B cell (primary cell): ENCODE measurements at regions of chr1 and their contacts with region 1.

Region 1: GRCh38 chr1:35882945-35883634 is at the start of gene AGO1:
- DNase-seq: peak; percentile 96
- ATAC-seq: peak; percentile 96
- H3K4me3 ChIP-seq: peak within 1 kb of the TSS; percentile 67 to 100 (median 94)
- H3K4me3 Mint-ChIP-seq: peak within 1 kb of the TSS; percentile 94
- H3K27ac ChIP-seq: peak within 1 kb of the TSS; percentile 64 to 82
- H3K27ac Mint-ChIP-seq: peak within 1 kb of the TSS; percentile 91
- H3K4me1 ChIP-seq: peaks cover 34 to 48% of the 10 kb centered on the region in 2 donors
- H3K4me1 Mint-ChIP-seq: peaks cover 51% of the 10 kb centered on the region
- H3K27me3 ChIP-seq: no peaks in the 10 kb centered on the region
- H3K27me3 Mint-ChIP-seq: peaks cover 4% of the 10 kb centered on the region
- CTCF ChIP-seq: peak; percentile 93
- total RNA-seq, gene AGO1: 38.8 and 41.3 TPM in 2 replicates

Region 2: DNA sequence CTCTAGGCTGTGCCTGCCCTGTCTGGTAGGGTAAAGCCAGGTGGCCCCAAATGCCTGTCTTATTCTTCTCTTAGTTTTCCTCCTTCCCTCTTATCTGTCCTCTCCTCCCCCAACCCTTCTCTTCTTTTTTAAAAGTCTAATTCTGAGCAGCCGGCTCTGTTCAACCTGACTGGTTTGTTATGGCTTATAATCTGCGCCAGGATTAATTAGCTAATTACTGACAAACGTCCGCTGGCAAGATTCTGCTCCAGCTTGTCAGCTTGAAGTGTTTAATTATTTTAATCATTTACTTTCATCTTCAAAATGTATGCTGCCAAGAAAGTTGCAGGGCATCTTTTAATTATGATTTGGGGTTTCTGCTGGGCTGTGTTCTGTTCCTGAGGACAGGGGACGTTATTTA is 214.6 kb before region 1 on chr1:
- CTCF ChIA-PET with region 1: no interaction called
- POLR2A ChIA-PET with region 1: no interaction called
- intact Hi-C with region 1: no loop called
- DNase-seq: no peak
- ATAC-seq: no peak
- H3K4me3 ChIP-seq: no peak overlapping the region
- H3K4me3 Mint-ChIP-seq: no peak overlapping the region
- H3K27ac ChIP-seq: no peak overlapping the region
- H3K27ac Mint-ChIP-seq: no peak overlapping the region
- H3K4me1 ChIP-seq: no peaks in the 10 kb centered on the region
- H3K4me1 Mint-ChIP-seq: no peaks in the 10 kb centered on the region
- H3K27me3 ChIP-seq: peaks cover 0 to 24% (median 5%) of the 10 kb centered on the region in 4 experiments
- H3K27me3 Mint-ChIP-seq: peaks cover 36% of the 10 kb centered on the region
- CTCF ChIP-seq: no peak

Region 3: GRCh38 chr1:35825255-35825654 is 57.8 kb before region 1 on chr1:
- CTCF ChIA-PET with region 1: no interaction called
- POLR2A ChIA-PET with region 1: no interaction called
- intact Hi-C with region 1: no loop called
- DNase-seq: no peak
- ATAC-seq: no peak
- H3K4me3 ChIP-seq: no peak overlapping the region
- H3K4me3 Mint-ChIP-seq: no peak overlapping the region
- H3K27ac ChIP-seq: no peak overlapping the region
- H3K27ac Mint-ChIP-seq: no peak overlapping the region
- H3K4me1 ChIP-seq: no peaks in the 10 kb centered on the region
- H3K4me1 Mint-ChIP-seq: no peaks in the 10 kb centered on the region
- H3K27me3 ChIP-seq: no peaks in the 10 kb centered on the region
- H3K27me3 Mint-ChIP-seq: no peaks in the 10 kb centered on the region
- CTCF ChIP-seq: no peak

Region 4: GRCh38 chr1:35894183-35894582 is 11.1 kb after region 1 on chr1:
- CTCF ChIA-PET with region 1: interaction called, 15 read pairs
- POLR2A ChIA-PET with region 1: interaction called, 3 read pairs
- intact Hi-C with region 1: loop called (anchors 1 kb)
- DNase-seq: peak; percentile 88
- ATAC-seq: peak; percentile 99
- H3K4me3 ChIP-seq: no peak overlapping the region
- H3K4me3 Mint-ChIP-seq: peak overlapping the region; percentile 23
- H3K27ac ChIP-seq: peak overlapping the region; percentile 71 to 93
- H3K27ac Mint-ChIP-seq: peak overlapping the region; percentile 96
- H3K4me1 ChIP-seq: peaks cover 21 to 24% of the 10 kb centered on the region in 2 donors
- H3K4me1 Mint-ChIP-seq: peaks cover 32% of the 10 kb centered on the region
- H3K27me3 ChIP-seq: no peaks in the 10 kb centered on the region
- H3K27me3 Mint-ChIP-seq: no peaks in the 10 kb centered on the region
- CTCF ChIP-seq: no peak

Region 5: DNA sequence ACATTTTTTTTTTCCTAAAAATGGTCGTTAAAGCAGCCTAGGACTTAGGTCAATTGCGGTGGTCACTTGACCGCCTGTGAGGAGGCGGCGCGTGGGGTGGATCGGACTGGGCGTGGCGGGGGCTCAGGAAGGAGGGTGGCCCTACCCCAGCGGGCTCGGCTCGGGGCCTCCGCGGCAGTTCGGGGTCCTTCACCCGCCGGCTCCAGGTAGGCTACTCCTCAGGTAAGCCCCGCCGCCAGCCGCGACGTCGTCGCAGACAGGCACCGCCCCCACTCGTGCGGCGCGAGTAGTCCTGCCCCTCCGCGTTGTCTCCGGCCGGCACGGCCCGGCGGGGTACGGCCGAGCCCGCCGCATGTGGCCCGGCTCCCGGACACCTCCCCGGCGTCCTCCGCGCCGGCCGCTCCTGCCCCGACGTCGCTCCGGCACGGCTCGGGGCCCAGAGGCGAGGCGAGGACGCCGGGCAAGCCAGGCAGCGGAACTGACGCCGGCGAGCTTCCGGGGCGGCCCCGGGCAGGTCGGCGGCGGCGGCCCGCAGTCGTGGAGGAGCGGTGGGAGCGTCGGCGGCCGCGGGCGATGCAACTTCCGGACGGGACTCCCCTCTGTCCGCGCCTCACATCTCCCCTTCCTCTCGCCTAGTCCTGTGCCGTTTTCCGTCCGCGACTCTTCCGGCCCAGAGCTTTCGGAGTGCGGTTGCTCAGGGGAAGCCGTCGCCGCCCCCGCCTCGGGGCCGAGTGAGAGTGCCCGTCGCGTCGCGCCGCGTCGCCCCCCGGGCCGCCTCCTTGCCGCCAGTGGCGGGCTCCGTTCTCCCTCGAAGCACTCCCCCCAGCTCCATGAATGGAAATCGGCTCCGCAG is 47.7 kb after region 1 on chr1 and contains the start of gene AGO3:
- CTCF ChIA-PET with region 1: interaction called, 16 read pairs
- POLR2A ChIA-PET with region 1: interaction called, 4 read pairs
- intact Hi-C with region 1: loop called (anchors 1 kb)
- DNase-seq: peak; percentile 95
- ATAC-seq: peak; percentile 86
- H3K4me3 ChIP-seq: peak within 1 kb of the TSS; percentile 71 to 86 (median 80)
- H3K4me3 Mint-ChIP-seq: peak within 1 kb of the TSS; percentile 86
- H3K27ac ChIP-seq: peak within 1 kb of the TSS; percentile 83 to 98
- H3K27ac Mint-ChIP-seq: peak within 1 kb of the TSS; percentile 91
- H3K4me1 ChIP-seq: peaks cover 13 to 14% of the 10 kb centered on the region in 2 donors
- H3K4me1 Mint-ChIP-seq: peaks cover 21% of the 10 kb centered on the region
- H3K27me3 ChIP-seq: no peaks in the 10 kb centered on the region
- H3K27me3 Mint-ChIP-seq: no peaks in the 10 kb centered on the region
- CTCF ChIP-seq: no peak
- total RNA-seq, gene AGO3: 44.9 and 52.5 TPM in 2 replicates

Region 6: DNA sequence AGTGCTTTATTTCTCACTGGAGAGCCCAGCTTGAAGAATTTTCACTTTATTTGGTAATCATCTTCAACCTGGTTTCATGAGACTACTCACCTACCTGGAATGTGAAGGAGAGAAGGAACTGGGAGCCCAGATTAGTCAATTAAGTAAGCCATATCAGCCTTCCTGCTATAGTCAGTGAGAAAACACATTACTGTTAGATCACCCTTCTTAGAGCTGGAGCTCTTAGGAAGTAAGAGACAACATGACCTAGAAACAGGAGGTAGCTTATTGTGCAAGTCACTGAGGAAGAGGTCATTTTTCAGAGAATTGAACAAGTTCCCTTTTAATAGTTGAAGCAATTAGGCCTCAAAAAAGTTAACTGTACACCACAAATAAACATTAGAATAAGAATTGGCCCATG is 151.6 kb after region 1 on chr1:
- CTCF ChIA-PET with region 1: no interaction called
- POLR2A ChIA-PET with region 1: no interaction called
- intact Hi-C with region 1: no loop called
- DNase-seq: no peak
- ATAC-seq: no peak
- H3K4me3 ChIP-seq: no peak overlapping the region
- H3K4me3 Mint-ChIP-seq: no peak overlapping the region
- H3K27ac ChIP-seq: no peak overlapping the region
- H3K27ac Mint-ChIP-seq: no peak overlapping the region
- H3K4me1 ChIP-seq: no peaks in the 10 kb centered on the region
- H3K4me1 Mint-ChIP-seq: no peaks in the 10 kb centered on the region
- H3K27me3 ChIP-seq: no peaks in the 10 kb centered on the region
- H3K27me3 Mint-ChIP-seq: no peaks in the 10 kb centered on the region
- CTCF ChIP-seq: no peak

Region 7: GRCh38 chr1:36070349-36070748 is 187.3 kb after region 1 on chr1:
- CTCF ChIA-PET with region 1: no interaction called
- POLR2A ChIA-PET with region 1: no interaction called
- intact Hi-C with region 1: no loop called
- DNase-seq: no peak
- ATAC-seq: no peak
- H3K4me3 ChIP-seq: no peak overlapping the region
- H3K4me3 Mint-ChIP-seq: no peak overlapping the region
- H3K27ac ChIP-seq: no peak overlapping the region
- H3K27ac Mint-ChIP-seq: no peak overlapping the region
- H3K4me1 ChIP-seq: no peaks in the 10 kb centered on the region
- H3K4me1 Mint-ChIP-seq: no peaks in the 10 kb centered on the region
- H3K27me3 ChIP-seq: no peaks in the 10 kb centered on the region
- H3K27me3 Mint-ChIP-seq: no peaks in the 10 kb centered on the region
- CTCF ChIP-seq: no peak

Region 8: DNA sequence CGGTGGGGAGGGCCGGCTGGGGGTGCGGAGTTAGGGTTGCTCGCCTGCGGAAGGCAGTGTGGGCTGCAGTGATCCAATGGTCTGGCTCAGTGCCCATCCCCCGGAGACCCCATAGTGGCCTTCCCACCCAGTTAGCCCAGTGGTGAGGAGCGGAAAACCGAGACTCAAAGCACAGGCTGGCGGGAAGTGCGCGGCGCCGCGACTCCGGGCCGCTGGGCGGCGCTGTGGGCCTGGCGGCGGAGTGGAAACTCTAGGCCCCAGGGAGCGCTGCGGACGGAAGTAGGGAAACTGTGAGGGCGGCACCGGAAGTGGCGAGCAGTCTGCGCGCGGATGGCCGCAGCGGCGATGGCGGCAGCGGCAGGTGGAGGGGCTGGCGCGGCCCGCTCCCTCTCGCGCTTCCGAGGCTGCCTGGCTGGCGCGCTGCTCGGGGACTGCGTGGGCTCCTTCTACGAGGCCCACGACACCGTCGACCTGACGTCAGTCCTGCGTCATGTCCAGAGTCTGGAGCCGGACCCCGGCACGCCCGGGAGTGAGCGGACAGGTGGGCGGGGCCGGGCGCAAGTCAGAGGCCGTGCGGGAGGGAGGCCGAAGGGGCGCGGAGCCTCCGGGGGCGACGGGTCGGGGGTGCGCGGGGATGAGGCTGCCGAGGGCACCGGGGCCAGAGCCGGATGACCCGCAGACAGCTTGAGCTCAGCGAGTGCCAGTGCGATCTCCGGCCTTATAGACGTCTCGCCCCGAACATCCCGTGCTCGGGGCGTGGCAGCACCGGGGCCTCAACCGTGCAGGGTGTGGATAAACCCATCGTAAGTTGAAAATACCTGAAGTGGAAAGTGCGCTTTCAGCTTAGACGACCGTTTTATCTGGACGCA is 205.7 kb after region 1 on chr1 and contains the start of gene ADPRS:
- CTCF ChIA-PET with region 1: interaction called, 4 read pairs
- POLR2A ChIA-PET with region 1: no interaction called
- intact Hi-C with region 1: loop called (anchors 2 kb)
- DNase-seq: peak; percentile 95
- ATAC-seq: peak; percentile 88
- H3K4me3 ChIP-seq: peak within 1 kb of the TSS; percentile 79 to 98 (median 84)
- H3K4me3 Mint-ChIP-seq: peak within 1 kb of the TSS; percentile 97
- H3K27ac ChIP-seq: peak within 1 kb of the TSS; percentile 78 to 92
- H3K27ac Mint-ChIP-seq: peak within 1 kb of the TSS; percentile 94
- H3K4me1 ChIP-seq: peaks cover 22 to 28% of the 10 kb centered on the region in 2 donors
- H3K4me1 Mint-ChIP-seq: peaks cover 22% of the 10 kb centered on the region
- H3K27me3 ChIP-seq: peaks cover 0 to 18% (median 9%) of the 10 kb centered on the region in 4 experiments
- H3K27me3 Mint-ChIP-seq: peaks cover 16% of the 10 kb centered on the region
- CTCF ChIP-seq: peak; percentile 97
- total RNA-seq, gene ADPRS: 20.9 and 24.0 TPM in 2 replicates